GM10248 (cell line): ENCODE measurements at regions of chr17 and their contacts with region 1.

Region 1: DNA sequence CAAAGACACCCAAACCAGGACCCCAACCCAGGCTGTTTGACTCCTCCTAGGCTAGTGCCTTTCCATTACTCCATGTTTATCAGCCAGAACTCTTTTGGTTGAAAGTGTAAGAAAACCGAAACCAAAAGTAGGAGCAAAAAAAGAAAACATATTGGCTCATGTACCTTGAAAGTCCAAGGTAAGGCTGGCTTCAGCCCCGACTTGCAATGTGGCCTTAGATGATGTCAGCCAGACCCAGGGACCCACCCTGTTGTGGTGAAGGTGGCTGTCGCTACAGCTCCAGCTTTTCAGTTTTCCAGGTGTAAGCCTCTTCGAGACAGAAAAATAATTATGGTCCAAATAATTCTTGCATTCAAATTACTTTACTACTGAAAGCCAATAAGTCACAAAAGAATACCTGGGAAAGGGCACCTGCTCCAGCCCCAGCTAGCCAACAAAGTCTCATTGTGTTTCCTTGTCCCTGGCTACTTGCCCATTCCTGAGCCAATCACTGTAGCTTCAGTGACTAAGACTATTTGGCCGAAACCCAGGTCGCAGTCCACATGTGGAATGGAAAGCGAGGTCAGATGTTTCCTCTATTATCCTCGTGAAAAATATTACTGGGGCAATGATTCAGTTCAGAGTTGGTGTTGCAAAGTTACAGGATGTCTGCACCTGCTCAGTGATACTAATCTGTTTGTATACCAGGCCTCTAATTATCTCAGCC is 20.7 kb downstream of the DNAH9 start:
- DNase-seq: no peak
- CTCF ChIP-seq: no peak

Region 2: DNA sequence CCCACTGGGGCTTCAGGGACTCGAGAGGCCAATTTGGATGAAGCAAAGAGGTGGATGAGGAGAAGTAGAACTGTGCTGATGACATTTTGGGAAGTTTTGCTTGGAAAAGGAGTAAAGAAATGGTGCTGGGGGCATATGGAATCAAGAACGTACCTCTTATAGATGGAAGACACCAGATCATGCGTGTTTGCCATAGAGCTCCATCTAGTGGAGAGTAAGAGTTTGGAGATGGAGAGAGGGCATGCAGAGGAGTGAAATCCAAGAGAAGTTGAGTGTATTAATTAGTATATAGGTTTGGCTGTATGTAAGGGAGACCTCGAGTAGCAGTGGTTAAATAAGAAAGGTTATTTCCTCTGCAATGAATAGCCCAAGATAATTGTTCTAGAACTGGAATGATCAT is 322.0 kb before region 1 on chr17:
- CTCF ChIA-PET with region 1: no interaction called
- POLR2A ChIA-PET with region 1: interaction called, 10 read pairs
- DNase-seq: no peak
- CTCF ChIP-seq: no peak